Gastrocnemius medialis (tissue), 4 donors: ENCODE measurements at regions of chr3 and their contacts with region 1.

Region 1: DNA sequence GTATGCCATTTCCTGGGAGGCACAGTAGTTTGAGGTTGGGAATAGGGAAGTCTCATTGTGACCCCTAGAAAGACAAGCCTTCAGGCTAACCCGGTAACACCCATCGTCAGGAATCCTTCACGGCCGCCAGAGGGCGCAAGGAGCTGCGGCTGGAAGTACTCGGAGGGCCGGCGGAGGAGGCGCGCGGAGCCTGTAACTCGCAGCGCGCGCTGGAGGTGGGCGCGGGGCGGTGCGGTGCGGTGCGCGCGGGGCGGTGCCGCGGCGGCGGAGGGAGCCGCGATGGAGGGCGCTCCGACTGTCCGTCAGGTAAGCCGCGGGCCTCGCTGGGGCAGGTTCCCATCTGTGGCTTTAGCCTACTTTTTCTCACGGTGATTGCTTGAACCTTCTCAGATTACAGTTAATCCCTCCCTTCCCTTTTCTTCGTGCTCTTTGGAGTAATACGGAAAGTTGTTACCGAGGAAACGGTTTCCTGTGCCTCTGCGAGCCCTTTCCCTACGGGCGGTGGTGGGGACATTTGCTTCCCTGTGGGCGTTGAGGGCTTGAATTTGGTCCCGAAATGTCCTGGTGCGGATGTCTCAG is at the start of gene GRAMD1C:
- DNase-seq: peak; percentile 63 to 68
- ATAC-seq: peak; percentile 82 to 90
- H3K4me3 ChIP-seq: peak within 1 kb of the TSS; percentile 28 to 65 (median 50)
- H3K27ac ChIP-seq: peak within 1 kb of the TSS in 3 of 4 donors; percentile 2 to 45 (median 18)
- H3K4me1 ChIP-seq: peaks cover 0 to 6% of the 10 kb centered on the region in 2 donors
- H3K27me3 ChIP-seq: no peaks in the 10 kb centered on the region
- CTCF ChIP-seq: peak; percentile 73 to 86 (median 82)
- POLR2A ChIP-seq: no peak
- total RNA-seq, gene GRAMD1C: 0.29 to 0.95 TPM in 2 of 4 donors, not detected in the others

Region 2: GRCh38 chr3:112990672-112991602 is 847.8 kb before region 1 on chr3 and contains the start of gene GTPBP8:
- in situ Hi-C with region 1: no loop called
- intact Hi-C with region 1: no loop called
- DNase-seq: peak; percentile 86 to 87
- ATAC-seq: peak; percentile 98
- H3K4me3 ChIP-seq: peak within 1 kb of the TSS; percentile 82 to 89 (median 88)
- H3K27ac ChIP-seq: peak within 1 kb of the TSS; percentile 92 to 97 (median 94)
- H3K4me1 ChIP-seq: peaks cover 20 to 21% of the 10 kb centered on the region in 2 donors
- H3K27me3 ChIP-seq: no peaks in the 10 kb centered on the region
- CTCF ChIP-seq: peak in 3 of 5 experiments; percentile 15 to 28 (median 22)
- POLR2A ChIP-seq: peak; percentile 71 to 86
- total RNA-seq, gene GTPBP8: 21.4 to 78.3 (median 40.7) TPM

Region 3: DNA sequence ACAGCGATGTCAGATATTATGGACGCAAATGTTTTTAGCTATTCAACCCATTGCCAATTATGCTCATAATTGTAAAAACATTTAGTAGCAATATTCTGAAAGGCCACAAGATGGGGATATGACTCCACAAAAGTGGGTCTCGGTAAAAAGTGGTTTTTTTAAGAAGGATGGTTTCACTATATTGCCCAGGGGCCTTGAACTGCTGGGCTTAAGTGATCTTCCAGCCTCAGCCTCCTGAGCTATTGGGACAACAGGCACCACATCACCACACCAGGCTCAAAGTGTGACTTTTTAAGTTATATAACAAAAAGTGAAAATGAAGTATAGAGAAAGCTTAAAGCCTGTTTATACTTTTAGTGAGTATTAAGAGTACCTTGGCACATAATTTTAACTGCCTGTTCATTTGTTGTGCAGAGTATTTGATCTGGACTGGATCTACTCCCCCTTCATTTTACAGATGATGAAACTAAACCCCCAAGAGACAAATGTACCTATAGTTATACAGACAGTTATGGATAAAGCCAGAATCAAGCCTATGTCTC is 102.1 kb before region 1 on chr3:
- in situ Hi-C with region 1: no loop called
- intact Hi-C with region 1: loop called (anchors 1 kb)
- DNase-seq: no peak
- ATAC-seq: peak; percentile 51 to 53
- H3K4me3 ChIP-seq: peak overlapping the region in 1 of 4 donors; percentile 2
- H3K27ac ChIP-seq: peak overlapping the region; percentile 27 to 60 (median 50)
- H3K4me1 ChIP-seq: peaks cover 80 to 86% of the 10 kb centered on the region in 2 donors
- H3K27me3 ChIP-seq: no peaks in the 10 kb centered on the region
- CTCF ChIP-seq: peak; percentile 52 to 69 (median 66)
- POLR2A ChIP-seq: no peak

Region 4: DNA sequence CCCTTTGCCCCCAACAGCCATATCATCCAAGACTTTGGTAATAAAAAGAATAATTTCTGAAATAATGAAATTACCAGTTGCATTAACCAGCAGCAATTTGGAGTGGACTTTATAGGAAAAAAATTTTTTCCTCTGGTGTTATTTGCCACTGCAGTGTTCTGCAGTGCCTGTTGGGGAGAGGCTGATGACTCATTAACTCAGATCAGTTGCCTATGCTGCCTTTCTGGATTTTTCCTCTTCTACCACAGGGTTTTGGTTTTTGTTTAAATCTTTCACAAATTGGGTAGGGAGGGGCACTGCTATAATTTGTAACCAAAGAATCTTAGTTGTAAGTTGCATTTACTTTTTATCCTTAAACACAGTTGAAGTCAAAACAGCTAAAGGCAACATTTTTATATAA is 69.2 kb before region 1 on chr3:
- in situ Hi-C with region 1: no loop called
- intact Hi-C with region 1: no loop called
- DNase-seq: no peak
- ATAC-seq: no peak
- H3K4me3 ChIP-seq: no peak overlapping the region
- H3K27ac ChIP-seq: no peak overlapping the region
- H3K4me1 ChIP-seq: peaks cover 6 to 12% of the 10 kb centered on the region in 2 donors
- H3K27me3 ChIP-seq: no peaks in the 10 kb centered on the region
- CTCF ChIP-seq: no peak
- POLR2A ChIP-seq: no peak

Region 5: GRCh38 chr3:113912552-113913236 is 74.0 kb after region 1 on chr3:
- in situ Hi-C with region 1: no loop called
- intact Hi-C with region 1: loop called (anchors 2 kb)
- DNase-seq: no peak
- ATAC-seq: peak in 1 of 2 donors; percentile 62
- H3K4me3 ChIP-seq: no peak overlapping the region
- H3K27ac ChIP-seq: no peak overlapping the region
- H3K4me1 ChIP-seq: no peaks in the 10 kb centered on the region
- H3K27me3 ChIP-seq: no peaks in the 10 kb centered on the region
- CTCF ChIP-seq: peak in 4 of 5 experiments; percentile 29 to 47 (median 36)
- POLR2A ChIP-seq: no peak

Region 6: GRCh38 chr3:115814778-115815380 is 1976.2 kb after region 1 on chr3:
- in situ Hi-C with region 1: no loop called
- intact Hi-C with region 1: loop called (anchors 5 kb)
- DNase-seq: peak; percentile 18 to 56
- ATAC-seq: peak; percentile 83 to 91
- H3K4me3 ChIP-seq: no peak overlapping the region
- H3K27ac ChIP-seq: no peak overlapping the region
- H3K4me1 ChIP-seq: no peaks in the 10 kb centered on the region
- H3K27me3 ChIP-seq: no peaks in the 10 kb centered on the region
- CTCF ChIP-seq: peak; percentile 58 to 90 (median 77)
- POLR2A ChIP-seq: no peak